H1 (cell line): ENCODE measurements at regions of chr11 and their contacts with region 1.

Region 1: DNA sequence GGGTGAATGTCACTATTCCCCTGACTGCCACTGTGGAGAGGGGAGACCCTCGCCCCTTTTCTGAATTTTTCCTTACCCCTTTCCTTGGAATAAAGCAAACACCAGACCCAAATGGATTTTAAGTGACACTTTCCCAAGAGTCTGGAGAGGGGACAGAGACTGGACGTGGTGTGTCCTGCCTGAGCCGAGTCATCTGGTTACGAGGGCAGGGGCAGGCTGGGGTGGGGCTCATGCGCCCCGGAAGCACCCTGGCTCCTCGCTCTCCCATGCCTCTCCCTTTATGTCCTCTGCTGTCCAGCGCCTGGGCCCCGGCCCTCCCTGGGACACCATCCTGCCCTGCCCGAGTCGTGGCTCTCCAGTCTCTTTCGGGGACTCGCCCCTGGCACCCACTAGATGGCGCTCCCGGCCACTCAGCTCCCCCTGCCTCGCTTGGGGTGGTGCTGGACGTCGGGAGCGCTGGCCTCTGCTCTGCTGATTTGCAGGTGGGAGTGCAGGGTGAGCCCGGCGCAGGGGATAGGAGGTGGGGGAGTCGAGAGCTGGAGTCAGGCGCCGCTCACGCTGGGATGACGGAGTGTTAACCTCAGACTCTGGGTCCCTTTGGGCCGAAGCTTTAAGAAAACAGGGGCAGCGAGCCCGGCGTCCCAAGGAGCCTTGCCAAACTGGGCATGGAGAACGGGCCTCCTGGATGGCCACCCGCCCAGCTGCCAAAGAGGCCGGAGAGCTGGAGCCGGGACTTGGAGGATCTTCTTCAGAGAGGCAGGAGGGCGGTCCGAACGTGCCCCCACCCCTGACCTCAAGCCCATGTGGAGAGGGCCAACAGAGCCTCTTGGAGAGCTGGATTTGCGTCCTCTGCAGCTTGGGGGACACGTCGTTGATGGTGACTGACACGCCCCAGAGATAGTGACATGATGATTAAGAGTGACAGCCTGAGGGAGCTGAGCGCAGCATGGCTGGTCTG is 89.9 kb downstream of the RPS6KA4 start:
- DNase-seq: peak; percentile 50 to 94
- H3K4me3 ChIP-seq: peak overlapping the region; percentile 18 to 60 (median 37); a peak in 7 of 8 replicates
- H3K27ac ChIP-seq: no peak overlapping the region
- H3K4me1 ChIP-seq: peaks cover 5 to 10% (median 7%) of the 10 kb centered on the region in 4 experiments; a peak in 6 of 7 replicates
- H3K27me3 ChIP-seq: peaks cover 0 to 13% (median 9%) of the 10 kb centered on the region in 4 experiments; a peak in 5 of 7 replicates
- CTCF ChIP-seq: peak; percentile 79 to 91 (median 83)
- EP300 ChIP-seq: no peak
- POLR2A ChIP-seq: no peak
- RAD21 ChIP-seq: peak; percentile 70 to 77

Region 2: GRCh38 chr11:63986156-63986931 is 462.5 kb before region 1 on chr11 and contains the start of gene OTUB1:
- CTCF ChIA-PET with region 1: no interaction called
- POLR2A ChIA-PET with region 1: no interaction called
- DNase-seq: peak; percentile 92 to 96
- H3K4me3 ChIP-seq: peak within 1 kb of the TSS; percentile 63 to 86 (median 70)
- H3K27ac ChIP-seq: peak within 1 kb of the TSS; percentile 96
- H3K4me1 ChIP-seq: peaks cover 0 to 16% (median 9%) of the 10 kb centered on the region in 4 experiments; a peak in 6 of 7 replicates
- H3K27me3 ChIP-seq: no peaks in the 10 kb centered on the region
- CTCF ChIP-seq: peak in 1 of 3 experiments; percentile 19; a peak in 1 of 4 replicates
- EP300 ChIP-seq: no peak
- POLR2A ChIP-seq: peak; percentile 94 to 97
- RAD21 ChIP-seq: no peak
- total RNA-seq, gene OTUB1: 110 and 112 TPM in 2 replicates

Region 3: GRCh38 chr11:64120951-64121569 is 327.8 kb before region 1 on chr11:
- CTCF ChIA-PET with region 1: no interaction called
- POLR2A ChIA-PET with region 1: no interaction called
- DNase-seq: no peak
- H3K4me3 ChIP-seq: no peak overlapping the region
- H3K27ac ChIP-seq: no peak overlapping the region
- H3K4me1 ChIP-seq: peaks cover 0 to 24% (median 17%) of the 10 kb centered on the region in 4 experiments; a peak in 6 of 7 replicates
- H3K27me3 ChIP-seq: peaks cover 0 to 13% (median 5%) of the 10 kb centered on the region in 4 experiments; a peak in 5 of 7 replicates
- CTCF ChIP-seq: no peak
- EP300 ChIP-seq: no peak
- POLR2A ChIP-seq: no peak
- RAD21 ChIP-seq: no peak

Region 4: DNA sequence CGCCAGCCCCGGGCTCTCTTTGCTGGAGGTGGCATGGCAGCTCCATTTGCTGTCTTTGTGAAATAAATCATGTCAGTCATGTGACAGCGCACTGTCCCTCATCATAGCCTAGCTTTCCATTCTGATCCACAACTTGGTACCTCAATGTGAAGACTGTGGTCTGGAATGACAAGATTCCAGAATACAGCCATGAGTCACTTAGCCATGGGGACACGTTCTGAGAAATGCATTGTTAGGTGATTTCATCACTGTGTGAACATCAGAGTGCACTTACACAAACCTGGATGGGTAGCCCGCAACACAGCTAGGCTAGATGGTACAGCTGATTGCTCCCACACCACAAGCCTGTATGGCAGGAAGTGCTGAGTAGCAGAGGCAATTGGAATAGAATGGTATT is 62.6 kb before region 1 on chr11:
- CTCF ChIA-PET with region 1: interaction called, 14 read pairs
- POLR2A ChIA-PET with region 1: no interaction called
- DNase-seq: no peak
- H3K4me3 ChIP-seq: no peak overlapping the region
- H3K27ac ChIP-seq: no peak overlapping the region
- H3K4me1 ChIP-seq: peaks cover 0 to 2% (median 0%) of the 10 kb centered on the region in 4 experiments; a peak in 4 of 7 replicates
- H3K27me3 ChIP-seq: peaks cover 0 to 2% (median 0%) of the 10 kb centered on the region in 4 experiments; a peak in 1 of 7 replicates
- CTCF ChIP-seq: no peak
- EP300 ChIP-seq: no peak
- POLR2A ChIP-seq: no peak
- RAD21 ChIP-seq: no peak

Region 5: DNA sequence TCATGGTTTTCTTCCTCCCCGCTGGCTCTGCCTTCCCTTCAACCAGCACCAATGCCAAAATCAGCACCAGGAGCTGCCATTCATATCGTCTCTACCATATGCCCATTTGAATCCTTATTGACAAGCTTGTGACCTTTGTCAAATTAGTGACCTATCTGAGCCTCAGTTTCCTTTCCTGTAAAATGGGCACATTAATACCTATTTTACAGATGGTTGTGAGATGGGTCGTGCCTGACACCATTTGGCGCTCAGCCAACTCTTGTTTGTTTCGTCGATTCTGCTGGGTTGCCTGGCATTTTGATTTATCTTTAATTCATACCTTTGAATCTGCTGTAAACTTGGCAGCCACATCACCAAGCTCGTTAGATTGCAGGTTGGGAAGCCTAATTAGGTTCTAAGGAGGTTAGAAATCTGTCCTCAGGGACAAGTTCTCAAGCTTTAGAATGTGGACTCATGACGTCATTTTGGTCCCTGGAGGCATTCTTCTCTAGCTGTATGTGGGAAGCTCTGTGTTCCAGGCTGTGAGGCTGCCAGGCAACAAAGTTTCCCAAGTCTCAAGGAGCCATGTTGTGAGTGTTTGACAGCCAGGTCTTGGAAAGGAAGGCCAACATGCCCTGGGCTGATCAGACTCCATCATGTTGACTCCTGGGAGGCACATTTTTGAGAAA is 28.9 kb before region 1 on chr11:
- CTCF ChIA-PET with region 1: interaction called, 16 read pairs
- POLR2A ChIA-PET with region 1: no interaction called
- DNase-seq: no peak
- H3K4me3 ChIP-seq: no peak overlapping the region
- H3K27ac ChIP-seq: no peak overlapping the region
- H3K4me1 ChIP-seq: peaks cover 1 to 4% (median 2%) of the 10 kb centered on the region in 4 experiments; a peak in 5 of 7 replicates
- H3K27me3 ChIP-seq: peaks cover 0 to 3% (median under 1%) of the 10 kb centered on the region in 4 experiments; a peak in 3 of 7 replicates
- CTCF ChIP-seq: no peak
- EP300 ChIP-seq: no peak
- POLR2A ChIP-seq: no peak
- RAD21 ChIP-seq: no peak

Region 6: GRCh38 chr11:64458997-64459396 is 10.1 kb after region 1 on chr11:
- CTCF ChIA-PET with region 1: interaction called, 33 read pairs
- POLR2A ChIA-PET with region 1: no interaction called
- DNase-seq: no peak
- H3K4me3 ChIP-seq: no peak overlapping the region
- H3K27ac ChIP-seq: no peak overlapping the region
- H3K4me1 ChIP-seq: peaks cover 0 to 7% (median 4%) of the 10 kb centered on the region in 4 experiments; a peak in 5 of 7 replicates
- H3K27me3 ChIP-seq: peaks cover 0 to 11% (median 0%) of the 10 kb centered on the region in 4 experiments; a peak in 1 of 7 replicates
- CTCF ChIP-seq: no peak
- EP300 ChIP-seq: no peak
- POLR2A ChIP-seq: no peak
- RAD21 ChIP-seq: no peak

Region 7: DNA sequence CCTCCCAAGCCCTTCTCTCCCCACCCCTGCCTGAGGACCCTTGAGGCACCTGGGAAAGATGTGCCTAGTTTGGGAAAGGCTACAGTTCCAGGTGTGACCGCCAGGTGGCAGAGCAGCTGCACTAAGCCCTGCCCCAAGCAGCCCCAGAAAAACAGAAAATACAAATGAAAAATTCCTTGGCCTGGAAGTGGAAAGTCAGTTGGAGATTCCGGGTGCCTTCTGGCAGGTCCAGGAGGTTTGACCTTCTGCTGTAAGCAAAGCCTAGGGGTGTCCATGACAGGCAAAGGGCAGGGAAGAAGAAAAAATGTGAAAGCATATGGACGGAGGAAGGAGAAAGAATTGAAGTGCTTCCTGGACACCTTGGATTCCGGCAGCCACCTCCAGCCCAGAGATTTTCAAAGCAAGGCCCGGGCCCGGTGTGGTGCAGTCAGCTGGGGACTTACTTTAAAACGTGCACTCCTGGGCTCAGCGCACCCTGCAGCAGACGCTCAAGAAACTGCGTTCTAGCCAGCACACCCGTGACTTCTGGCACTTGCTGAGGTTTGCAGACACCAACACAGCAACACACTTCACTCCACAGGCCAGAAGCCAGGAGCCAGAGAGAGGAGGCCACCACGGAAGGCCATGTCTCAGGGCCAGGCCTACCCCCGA is 104.8 kb after region 1 on chr11:
- CTCF ChIA-PET with region 1: interaction called, 10 read pairs
- POLR2A ChIA-PET with region 1: no interaction called
- DNase-seq: peak in 1 of 2 experiments; percentile 92
- H3K4me3 ChIP-seq: no peak overlapping the region
- H3K27ac ChIP-seq: no peak overlapping the region
- H3K4me1 ChIP-seq: peaks cover 0 to 8% (median 6%) of the 10 kb centered on the region in 4 experiments; a peak in 6 of 7 replicates
- H3K27me3 ChIP-seq: no peaks in the 10 kb centered on the region; a peak in 3 of 7 replicates
- CTCF ChIP-seq: peak; percentile 90 to 96 (median 90)
- EP300 ChIP-seq: no peak
- POLR2A ChIP-seq: no peak
- RAD21 ChIP-seq: peak; percentile 91 to 93

Region 8: GRCh38 chr11:64583296-64584232 is 134.7 kb after region 1 on chr11:
- CTCF ChIA-PET with region 1: interaction called, 11 read pairs
- POLR2A ChIA-PET with region 1: no interaction called
- DNase-seq: no peak
- H3K4me3 ChIP-seq: no peak overlapping the region
- H3K27ac ChIP-seq: no peak overlapping the region
- H3K4me1 ChIP-seq: no peaks in the 10 kb centered on the region
- H3K27me3 ChIP-seq: no peaks in the 10 kb centered on the region; a peak in 2 of 7 replicates
- CTCF ChIP-seq: no peak
- EP300 ChIP-seq: no peak
- POLR2A ChIP-seq: no peak
- RAD21 ChIP-seq: no peak